K562 (cell line): ENCODE measurements at regions of chr2 and their contacts with region 1.

Region 1: DNA sequence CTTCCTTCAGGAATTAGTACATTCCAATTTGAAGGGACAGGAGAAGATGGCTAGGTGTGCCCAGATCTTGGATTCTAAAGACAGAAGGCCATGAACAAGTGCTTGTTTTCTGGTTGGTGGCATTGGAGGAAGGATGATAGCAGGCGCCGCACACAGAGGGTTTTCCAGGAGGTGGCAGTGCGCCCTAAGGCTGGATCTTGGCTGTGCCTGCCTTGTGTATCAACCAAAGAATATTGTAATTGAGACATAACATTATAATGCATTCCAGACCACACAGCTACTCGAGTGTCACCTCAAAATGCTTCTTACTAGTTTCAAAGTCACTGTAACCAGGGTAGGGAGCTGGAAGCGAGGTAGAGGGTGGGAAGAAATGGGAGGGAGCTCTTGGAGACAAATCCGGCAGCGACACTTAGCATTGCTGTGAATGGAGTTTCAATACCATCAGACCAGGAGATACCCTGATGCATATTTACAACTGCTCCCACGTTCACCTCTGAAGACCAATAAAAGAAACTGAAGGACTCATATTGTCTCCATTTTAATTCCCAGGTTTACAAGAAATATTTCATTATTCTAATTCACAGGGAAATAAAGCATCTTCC is 42.5 kb downstream of the CPO start:
- DNase-seq: peak in 3 of 4 experiments; percentile 2 to 10 (median 5)
- ATAC-seq: no peak
- H3K4me3 ChIP-seq: no peak overlapping the region
- H3K27ac ChIP-seq: no peak overlapping the region
- H3K4me1 ChIP-seq: no peaks in the 10 kb centered on the region
- H3K27me3 ChIP-seq: no peaks in the 10 kb centered on the region; a peak in 1 of 5 replicates
- CTCF ChIP-seq: peak; percentile 23 to 37 (median 31); a peak in 4 of 6 replicates
- EP300 ChIP-seq: no peak
- POLR2A ChIP-seq: no peak
- RAD21 ChIP-seq: peak; percentile 53 to 57

Region 2: GRCh38 chr2:206531996-206532543 is 449.8 kb before region 1 on chr2:
- CTCF ChIA-PET with region 1: no interaction called
- POLR2A ChIA-PET with region 1: no interaction called
- in situ Hi-C with region 1: no loop called
- intact Hi-C with region 1: no loop called
- DNase-seq: no peak
- ATAC-seq: no peak
- H3K4me3 ChIP-seq: no peak overlapping the region
- H3K27ac ChIP-seq: no peak overlapping the region
- H3K4me1 ChIP-seq: no peaks in the 10 kb centered on the region
- H3K27me3 ChIP-seq: no peaks in the 10 kb centered on the region
- CTCF ChIP-seq: no peak
- EP300 ChIP-seq: no peak
- POLR2A ChIP-seq: no peak
- RAD21 ChIP-seq: no peak

Region 3: GRCh38 chr2:206774871-206775270 is 207.0 kb before region 1 on chr2:
- CTCF ChIA-PET with region 1: no interaction called
- POLR2A ChIA-PET with region 1: no interaction called
- in situ Hi-C with region 1: no loop called
- intact Hi-C with region 1: no loop called
- DNase-seq: no peak
- ATAC-seq: no peak
- H3K4me3 ChIP-seq: no peak overlapping the region
- H3K27ac ChIP-seq: no peak overlapping the region
- H3K4me1 ChIP-seq: no peaks in the 10 kb centered on the region
- H3K27me3 ChIP-seq: no peaks in the 10 kb centered on the region
- CTCF ChIP-seq: no peak
- EP300 ChIP-seq: no peak
- POLR2A ChIP-seq: no peak
- RAD21 ChIP-seq: no peak

Region 4: GRCh38 chr2:207341804-207342203 is 360.0 kb after region 1 on chr2:
- CTCF ChIA-PET with region 1: no interaction called
- POLR2A ChIA-PET with region 1: no interaction called
- in situ Hi-C with region 1: no loop called
- intact Hi-C with region 1: loop called (anchors 10 kb)
- DNase-seq: peak in 1 of 4 experiments; percentile 14
- ATAC-seq: peak; percentile 64; the same call in 1 of the 3 replicates
- H3K4me3 ChIP-seq: no peak overlapping the region
- H3K27ac ChIP-seq: no peak overlapping the region
- H3K4me1 ChIP-seq: no peaks in the 10 kb centered on the region; a peak in 2 of 5 replicates
- H3K27me3 ChIP-seq: no peaks in the 10 kb centered on the region
- CTCF ChIP-seq: peak in 1 of 3 experiments; percentile 38; a peak in 2 of 6 replicates
- EP300 ChIP-seq: no peak
- POLR2A ChIP-seq: no peak
- RAD21 ChIP-seq: peak in 1 of 2 experiments; percentile 66; a peak in 3 of 4 replicates